AG04450 (cell line): ENCODE measurements at regions of chr7 and their contacts with region 1.

Region 1: GRCh38 chr7:121643320-121643719 is 229.6 kb upstream of the PTPRZ1 start:
- DNase-seq: no peak
- H3K4me3 ChIP-seq: no peak overlapping the region
- H3K27ac ChIP-seq: no peak overlapping the region
- H3K27me3 ChIP-seq: no peaks in the 10 kb centered on the region
- CTCF ChIP-seq: no peak

Region 2: GRCh38 chr7:121633186-121633585 is 10.1 kb before region 1 on chr7:
- CTCF ChIA-PET with region 1: no interaction called
- POLR2A ChIA-PET with region 1: no interaction called
- DNase-seq: no peak
- H3K4me3 ChIP-seq: no peak overlapping the region
- H3K27ac ChIP-seq: no peak overlapping the region
- H3K27me3 ChIP-seq: no peaks in the 10 kb centered on the region
- CTCF ChIP-seq: no peak

Region 3: DNA sequence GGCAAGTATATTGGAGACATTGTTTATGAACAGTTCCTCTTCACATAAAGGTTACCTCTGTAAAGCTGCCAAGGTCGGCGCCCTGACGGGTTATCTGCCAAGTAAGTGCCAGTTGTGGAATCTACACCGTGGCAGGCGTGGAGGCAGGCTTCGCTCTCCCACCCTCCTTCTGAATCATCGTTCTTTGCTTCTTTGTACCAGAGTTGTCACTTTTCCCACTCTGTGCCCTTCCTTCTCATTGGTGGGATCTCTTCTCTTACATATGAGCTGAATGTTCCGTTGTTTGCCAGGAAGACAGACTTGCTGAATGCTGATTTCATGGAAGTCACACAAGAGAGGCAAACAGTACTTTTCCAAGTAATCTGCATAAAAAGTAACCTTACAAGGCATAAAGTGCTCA is 189.0 kb after region 1 on chr7:
- CTCF ChIA-PET with region 1: no interaction called
- POLR2A ChIA-PET with region 1: no interaction called
- DNase-seq: no peak
- H3K4me3 ChIP-seq: no peak overlapping the region
- H3K27ac ChIP-seq: no peak overlapping the region
- H3K27me3 ChIP-seq: no peaks in the 10 kb centered on the region
- CTCF ChIP-seq: no peak

Region 4: GRCh38 chr7:121914676-121915279 is 271.5 kb after region 1 on chr7:
- CTCF ChIA-PET with region 1: interaction called, 10 read pairs
- POLR2A ChIA-PET with region 1: no interaction called
- DNase-seq: no peak
- H3K4me3 ChIP-seq: no peak overlapping the region
- H3K27ac ChIP-seq: no peak overlapping the region
- H3K27me3 ChIP-seq: no peaks in the 10 kb centered on the region
- CTCF ChIP-seq: no peak